Activated T-helper 2 cell treated with anti-CD3 and anti-CD28 coated beads, Interferon-gamma antibody, Interleukin-2, Interleukin-4, amounts not matched to agents 10 μg/mL and 5 μg/mL and 100 μg/mL, durations not matched to agents 14 hours and 24 hours and 36 hours (primary cell): ENCODE measurements at regions of chr19 and their contacts with region 1.

Region 1: DNA sequence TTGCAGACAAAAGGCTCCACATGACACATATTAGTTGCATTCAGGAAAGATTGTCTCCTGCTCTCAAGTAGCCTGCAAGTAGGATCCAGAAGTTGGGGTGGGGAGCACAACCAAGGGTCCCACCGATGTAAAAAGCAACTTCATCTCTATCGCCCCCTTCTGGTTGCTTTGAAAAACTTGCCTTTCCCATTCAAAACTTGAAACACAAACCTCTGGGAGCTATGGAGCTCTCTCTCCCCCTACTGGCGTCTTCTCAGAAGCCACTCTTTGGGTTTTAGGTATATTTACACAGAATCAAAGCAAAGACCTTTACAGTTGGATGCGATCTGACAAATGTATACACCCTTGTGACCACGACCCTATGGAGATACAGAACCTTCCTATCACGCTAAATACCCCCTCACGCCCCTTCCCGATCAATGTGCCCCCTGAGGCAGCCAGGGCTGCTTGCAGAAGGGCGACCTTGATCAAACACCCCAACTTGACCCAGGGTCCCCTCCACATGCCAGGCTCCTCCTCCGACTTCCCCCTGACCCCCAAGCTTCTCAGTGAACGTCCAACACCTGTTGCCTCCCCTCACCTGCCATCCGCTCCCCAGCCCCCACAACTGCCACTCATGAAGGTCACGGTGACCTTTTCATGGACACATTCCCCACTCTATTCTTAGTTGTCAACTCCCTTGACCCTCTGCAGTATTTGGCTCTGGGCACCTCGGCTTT is 10.1 kb downstream of the NOSIP start:
- DNase-seq: peak; percentile 69
- H3K4me3 Mint-ChIP-seq: no peak overlapping the region
- H3K27ac Mint-ChIP-seq: peak overlapping the region; percentile 77
- H3K4me1 Mint-ChIP-seq: peaks cover 40% of the 10 kb centered on the region
- H3K27me3 Mint-ChIP-seq: no peaks in the 10 kb centered on the region

Region 2: GRCh38 chr19:49224856-49225255 is 345.4 kb before region 1 on chr19:
- intact Hi-C with region 1: no loop called
- DNase-seq: peak; percentile 19
- H3K4me3 Mint-ChIP-seq: no peak overlapping the region
- H3K27ac Mint-ChIP-seq: no peak overlapping the region
- H3K4me1 Mint-ChIP-seq: peaks cover 4% of the 10 kb centered on the region
- H3K27me3 Mint-ChIP-seq: no peaks in the 10 kb centered on the region

Region 3: DNA sequence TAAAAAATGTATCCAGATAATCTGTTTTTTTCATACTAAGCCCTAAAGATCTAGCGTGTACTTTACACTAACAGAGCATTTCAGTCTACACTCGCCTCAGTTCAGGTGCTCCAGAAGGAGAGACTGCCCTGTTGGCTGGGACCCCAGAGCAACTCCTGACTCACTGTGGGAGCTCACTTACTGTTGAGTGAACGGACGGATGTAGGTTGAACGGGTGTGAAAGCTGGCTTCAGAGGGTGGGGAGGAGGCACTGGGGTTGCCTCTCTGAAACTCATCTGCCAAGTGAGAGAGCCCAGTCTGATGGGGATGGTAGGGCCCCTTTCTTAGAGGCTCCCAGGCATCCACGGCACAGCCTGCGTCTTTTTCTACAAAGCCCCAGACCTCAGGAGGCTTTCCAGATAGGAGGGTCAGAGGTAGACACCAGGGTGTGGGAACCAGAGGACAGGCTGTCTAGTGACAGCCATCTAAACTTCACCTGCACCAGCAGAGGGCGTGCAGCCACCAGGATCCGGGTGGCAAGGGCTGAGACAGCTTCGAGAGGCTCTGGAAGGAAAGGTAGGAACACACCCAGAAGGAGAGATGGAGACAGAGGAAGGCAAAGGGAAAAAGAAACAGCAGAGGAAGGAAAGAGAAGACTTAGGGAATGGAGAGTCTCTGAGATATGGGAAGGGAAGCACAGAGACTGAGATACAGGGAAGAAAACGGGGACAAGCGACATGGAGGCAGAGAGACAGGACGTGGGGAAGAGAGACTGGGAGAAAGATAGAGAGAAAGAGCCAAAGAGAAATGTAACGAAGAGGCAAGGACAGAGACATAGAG is 178.5 kb before region 1 on chr19:
- intact Hi-C with region 1: no loop called
- DNase-seq: peak; percentile 65
- H3K4me3 Mint-ChIP-seq: no peak overlapping the region
- H3K27ac Mint-ChIP-seq: no peak overlapping the region
- H3K4me1 Mint-ChIP-seq: peaks cover 7% of the 10 kb centered on the region
- H3K27me3 Mint-ChIP-seq: peaks cover 5% of the 10 kb centered on the region

Region 4: GRCh38 chr19:49506575-49507105 is 63.7 kb before region 1 on chr19:
- intact Hi-C with region 1: loop called (anchors 1 kb)
- DNase-seq: peak; percentile 69
- H3K4me3 Mint-ChIP-seq: no peak overlapping the region
- H3K27ac Mint-ChIP-seq: no peak overlapping the region
- H3K4me1 Mint-ChIP-seq: peaks cover 14% of the 10 kb centered on the region
- H3K27me3 Mint-ChIP-seq: peaks cover 4% of the 10 kb centered on the region

Region 5: GRCh38 chr19:49546825-49547565 is 23.3 kb before region 1 on chr19:
- intact Hi-C with region 1: loop called (anchors 1 kb)
- DNase-seq: peak; percentile 60
- H3K4me3 Mint-ChIP-seq: peak overlapping the region; percentile 41
- H3K27ac Mint-ChIP-seq: peak overlapping the region; percentile 49
- H3K4me1 Mint-ChIP-seq: peaks cover 23% of the 10 kb centered on the region
- H3K27me3 Mint-ChIP-seq: no peaks in the 10 kb centered on the region

Region 6: DNA sequence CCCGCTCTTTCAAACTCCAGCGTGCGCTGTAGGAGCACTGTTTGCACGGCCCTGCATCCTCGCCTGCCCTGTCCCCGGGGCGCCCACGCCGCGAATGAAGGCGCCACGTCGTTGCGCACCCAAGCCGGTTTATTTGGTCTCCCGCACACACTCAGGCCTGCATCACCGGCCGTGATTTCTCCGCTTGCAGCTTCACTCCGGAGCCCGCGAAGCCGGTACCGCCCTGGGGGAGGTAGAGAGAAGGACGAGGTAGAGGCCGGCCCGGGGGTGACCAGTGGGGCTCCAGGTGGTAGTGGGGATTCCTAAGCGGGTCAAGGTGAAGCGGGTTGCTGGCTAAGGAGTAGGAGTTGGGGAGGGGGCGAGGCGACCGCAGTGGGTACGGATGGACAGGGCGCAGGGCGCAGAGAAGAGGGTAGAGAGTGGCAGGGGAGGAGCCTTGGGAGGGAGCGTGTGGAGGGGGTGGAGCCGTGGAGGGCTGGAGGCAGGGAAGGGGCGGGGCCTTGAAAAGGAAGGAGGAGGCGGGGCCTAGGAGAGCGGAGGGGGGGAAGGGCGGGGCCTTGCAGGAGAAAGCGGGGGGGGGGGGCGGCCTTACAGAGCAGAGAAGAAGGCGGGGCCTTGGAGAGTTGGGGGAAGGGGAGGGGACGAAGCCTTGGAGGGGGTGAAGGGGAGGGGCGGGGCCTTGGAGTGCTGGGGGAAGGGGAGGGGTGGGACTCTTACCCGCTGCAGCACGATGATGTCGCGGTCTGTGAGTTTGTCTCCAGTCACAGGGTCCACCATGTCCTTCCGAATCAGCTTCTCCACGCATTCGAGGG is 14.5 kb before region 1 on chr19:
- intact Hi-C with region 1: loop called (anchors 1 kb)
- DNase-seq: peak; percentile 73
- H3K4me3 Mint-ChIP-seq: no peak overlapping the region
- H3K27ac Mint-ChIP-seq: peak overlapping the region; percentile 99
- H3K4me1 Mint-ChIP-seq: peaks cover 61% of the 10 kb centered on the region
- H3K27me3 Mint-ChIP-seq: no peaks in the 10 kb centered on the region